ENCODE measurements at regions of chr15 and their contacts with region 1.

Region 1: DNA sequence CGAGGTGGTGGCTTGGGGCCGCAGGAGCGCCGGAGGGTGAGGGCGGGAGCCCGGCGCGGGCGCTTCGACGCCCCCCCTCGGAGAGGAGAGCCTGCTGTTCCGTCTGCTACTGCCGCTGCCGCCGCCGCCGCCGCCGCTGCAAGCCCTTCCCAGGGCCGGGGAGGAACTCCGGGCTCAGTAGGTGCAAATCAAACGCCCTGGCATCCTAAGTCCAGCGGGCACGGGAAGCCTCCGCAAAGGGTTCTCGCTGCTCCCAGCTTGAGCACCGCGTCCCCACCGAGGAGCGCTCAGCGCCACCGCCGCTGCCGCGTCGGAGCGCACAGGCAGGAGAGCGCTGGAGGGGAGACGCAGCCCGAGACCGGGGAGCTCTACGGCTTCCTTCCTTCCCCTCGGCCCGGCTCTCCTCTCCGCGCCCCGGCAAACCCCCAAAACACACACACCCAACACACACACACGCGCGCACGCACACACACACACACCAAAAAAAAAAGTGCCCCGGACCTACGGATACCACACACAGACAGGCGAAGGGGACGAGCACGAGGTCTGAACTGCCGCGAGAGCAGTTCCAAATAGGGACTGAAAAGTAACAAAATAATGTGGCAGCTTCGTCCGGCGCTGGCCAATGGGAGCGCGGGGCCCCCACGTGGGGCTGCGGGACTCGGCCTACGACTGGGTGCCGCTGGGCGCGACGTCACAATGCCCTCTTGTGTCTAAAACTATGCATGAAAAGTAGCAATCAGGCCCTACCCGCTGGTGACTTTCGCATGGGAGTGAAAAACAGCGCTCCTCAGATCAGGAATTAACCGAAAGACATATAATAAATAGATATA is at the start of gene TLE3:
- DNase-seq: peak; percentile 99
- ATAC-seq: peak; percentile 53
- H3K4me3 ChIP-seq: peak within 1 kb of the TSS; percentile 82 to 97 (median 92)
- H3K4me3 Mint-ChIP-seq: peak within 1 kb of the TSS; percentile 98
- H3K27ac ChIP-seq: peak within 1 kb of the TSS; percentile 79 to 87
- H3K27ac Mint-ChIP-seq: peak within 1 kb of the TSS; percentile 97
- H3K4me1 ChIP-seq: peaks cover 57 to 68% of the 10 kb centered on the region in 2 donors
- H3K4me1 Mint-ChIP-seq: peaks cover 65% of the 10 kb centered on the region
- H3K27me3 ChIP-seq: peaks cover 0 to 20% (median 10%) of the 10 kb centered on the region in 4 experiments
- H3K27me3 Mint-ChIP-seq: peaks cover under 1% of the 10 kb centered on the region
- CTCF ChIP-seq: peak; percentile 56
- total RNA-seq, gene TLE3: 261 and 278 TPM in 2 replicates

Region 2: DNA sequence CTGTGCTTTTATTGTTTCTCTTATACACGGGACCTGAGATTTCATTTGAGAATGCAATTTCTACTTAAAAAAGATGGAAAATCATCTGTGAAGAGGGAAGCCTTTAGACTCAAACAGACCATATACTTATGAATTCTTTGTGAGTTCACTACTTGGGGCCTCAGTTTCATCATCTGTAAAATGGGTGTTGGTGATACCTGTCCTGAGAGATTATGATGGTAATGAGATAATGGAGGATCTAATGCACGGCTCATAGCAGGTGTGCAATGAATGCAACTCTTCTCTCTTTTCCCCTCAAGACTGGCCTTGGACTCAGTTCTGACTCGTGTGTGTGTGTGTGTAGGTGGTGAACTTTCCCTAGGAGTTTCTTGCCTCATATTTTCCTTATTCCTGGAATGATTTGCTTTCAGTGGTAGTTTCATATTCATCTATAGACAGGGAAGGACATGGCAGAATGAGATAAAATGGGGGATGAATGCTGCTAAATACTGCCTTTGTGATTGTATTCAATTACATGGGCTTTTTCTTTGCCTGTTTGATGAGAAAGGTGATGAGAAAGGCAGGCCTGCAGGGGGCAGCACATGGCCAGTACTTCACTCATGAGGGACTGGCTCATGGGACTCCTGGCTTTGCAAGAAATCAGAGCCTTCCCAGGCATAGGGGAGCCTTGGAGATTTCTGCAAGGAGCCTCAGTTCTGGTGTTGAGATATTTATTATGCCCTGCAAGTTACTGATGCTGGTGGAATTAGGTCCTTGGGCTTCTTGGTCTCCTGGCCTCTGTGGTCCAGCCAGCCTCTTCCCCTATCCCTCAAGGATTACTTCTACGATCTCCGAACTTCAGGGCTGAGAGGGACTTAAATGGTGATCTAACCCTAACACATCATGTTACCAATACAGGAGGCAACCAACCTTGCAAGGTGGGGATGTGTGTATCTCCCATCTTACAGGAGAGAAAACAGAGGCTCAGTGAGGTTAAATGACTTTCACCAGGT is 574.2 kb before region 1 on chr15:
- CTCF ChIA-PET with region 1: no interaction called
- POLR2A ChIA-PET with region 1: no interaction called
- intact Hi-C with region 1: loop called (anchors 5 kb)
- DNase-seq: peak; percentile 47
- ATAC-seq: no peak
- H3K4me3 ChIP-seq: no peak overlapping the region
- H3K4me3 Mint-ChIP-seq: no peak overlapping the region
- H3K27ac ChIP-seq: no peak overlapping the region
- H3K27ac Mint-ChIP-seq: no peak overlapping the region
- H3K4me1 ChIP-seq: no peaks in the 10 kb centered on the region
- H3K4me1 Mint-ChIP-seq: no peaks in the 10 kb centered on the region
- H3K27me3 ChIP-seq: peaks cover 0 to 7% (median 2%) of the 10 kb centered on the region in 4 experiments
- H3K27me3 Mint-ChIP-seq: peaks cover 8% of the 10 kb centered on the region
- CTCF ChIP-seq: peak; percentile 70

Region 3: GRCh38 chr15:69755551-69756310 is 341.8 kb before region 1 on chr15:
- CTCF ChIA-PET with region 1: interaction called, 8 read pairs
- POLR2A ChIA-PET with region 1: interaction called, 36 read pairs
- intact Hi-C with region 1: loop called (anchors 1 kb)
- DNase-seq: peak; percentile 84
- ATAC-seq: peak; percentile 85
- H3K4me3 ChIP-seq: peak overlapping the region in 2 of 5 experiments; percentile 8 to 23
- H3K4me3 Mint-ChIP-seq: peak overlapping the region; percentile 84
- H3K27ac ChIP-seq: peak overlapping the region; percentile 22 to 73
- H3K27ac Mint-ChIP-seq: peak overlapping the region; percentile 91
- H3K4me1 ChIP-seq: peaks cover 69 to 72% of the 10 kb centered on the region in 2 donors
- H3K4me1 Mint-ChIP-seq: peaks cover 79% of the 10 kb centered on the region
- H3K27me3 ChIP-seq: no peaks in the 10 kb centered on the region
- H3K27me3 Mint-ChIP-seq: no peaks in the 10 kb centered on the region
- CTCF ChIP-seq: no peak

Region 4: GRCh38 chr15:70014860-70015490 is 82.6 kb before region 1 on chr15:
- CTCF ChIA-PET with region 1: interaction called, 4 read pairs
- POLR2A ChIA-PET with region 1: interaction called, 4 read pairs
- intact Hi-C with region 1: loop called (anchors 2 kb)
- DNase-seq: peak; percentile 72
- ATAC-seq: peak; percentile 76
- H3K4me3 ChIP-seq: peak overlapping the region in 1 of 5 experiments; percentile 37
- H3K4me3 Mint-ChIP-seq: peak overlapping the region; percentile 76
- H3K27ac ChIP-seq: peak overlapping the region; percentile 81 to 84
- H3K27ac Mint-ChIP-seq: peak overlapping the region; percentile 97
- H3K4me1 ChIP-seq: peaks cover 69 to 77% of the 10 kb centered on the region in 2 donors
- H3K4me1 Mint-ChIP-seq: peaks cover 79% of the 10 kb centered on the region
- H3K27me3 ChIP-seq: no peaks in the 10 kb centered on the region
- H3K27me3 Mint-ChIP-seq: no peaks in the 10 kb centered on the region
- CTCF ChIP-seq: no peak

Region 5: GRCh38 chr15:70196314-70197291 is 99.0 kb after region 1 on chr15:
- CTCF ChIA-PET with region 1: no interaction called
- POLR2A ChIA-PET with region 1: interaction called, 8 read pairs
- intact Hi-C with region 1: loop called (anchors 1 kb)
- DNase-seq: peak; percentile 86
- ATAC-seq: peak; percentile 85
- H3K4me3 ChIP-seq: no peak overlapping the region
- H3K4me3 Mint-ChIP-seq: peak overlapping the region; percentile 72
- H3K27ac ChIP-seq: no peak overlapping the region
- H3K27ac Mint-ChIP-seq: peak overlapping the region; percentile 89
- H3K4me1 ChIP-seq: peaks cover 33 to 57% of the 10 kb centered on the region in 2 donors
- H3K4me1 Mint-ChIP-seq: peaks cover 51% of the 10 kb centered on the region
- H3K27me3 ChIP-seq: peaks cover 0 to 16% (median 6%) of the 10 kb centered on the region in 4 experiments
- H3K27me3 Mint-ChIP-seq: peaks cover 26% of the 10 kb centered on the region
- CTCF ChIP-seq: no peak

Region 6: DNA sequence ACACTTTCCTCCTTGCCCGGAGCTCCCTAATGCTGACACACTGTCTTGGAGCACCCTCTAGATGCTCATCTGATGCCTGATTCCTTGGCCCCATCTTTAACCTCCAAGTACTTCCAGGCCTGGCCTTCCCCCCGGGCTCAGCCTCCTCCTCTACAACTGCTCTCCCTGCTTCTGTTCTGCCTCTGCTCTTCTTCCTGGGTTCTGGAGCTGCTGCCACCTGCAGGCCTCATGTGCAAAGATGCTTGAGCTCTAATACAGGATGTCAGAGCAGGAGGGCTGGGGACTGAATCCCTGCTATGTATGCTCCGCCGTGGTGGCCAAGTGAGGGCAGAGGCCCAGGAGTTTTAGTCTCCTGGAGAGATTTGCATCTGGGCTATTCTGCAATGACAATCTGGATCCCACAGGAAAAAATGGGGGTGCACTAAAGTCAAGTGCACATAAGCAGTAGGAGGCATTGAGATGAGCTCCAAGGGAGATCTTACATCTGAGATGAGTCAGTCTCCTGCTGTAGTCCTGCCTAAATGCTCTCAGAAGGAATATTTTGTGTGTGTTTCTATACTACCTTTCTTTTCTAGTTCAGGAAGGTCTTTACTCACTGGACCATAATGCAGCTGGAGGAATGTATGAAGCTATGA is 369.5 kb after region 1 on chr15:
- CTCF ChIA-PET with region 1: interaction called, 29 read pairs
- POLR2A ChIA-PET with region 1: no interaction called
- intact Hi-C with region 1: no loop called
- DNase-seq: peak; percentile 70
- ATAC-seq: peak; percentile 84
- H3K4me3 ChIP-seq: no peak overlapping the region
- H3K4me3 Mint-ChIP-seq: no peak overlapping the region
- H3K27ac ChIP-seq: no peak overlapping the region
- H3K27ac Mint-ChIP-seq: peak overlapping the region; percentile 3
- H3K4me1 ChIP-seq: peaks cover 11 to 15% of the 10 kb centered on the region in 2 donors
- H3K4me1 Mint-ChIP-seq: peaks cover 21% of the 10 kb centered on the region
- H3K27me3 ChIP-seq: peaks cover 0 to 12% (median under 1%) of the 10 kb centered on the region in 4 experiments
- H3K27me3 Mint-ChIP-seq: peaks cover 9% of the 10 kb centered on the region
- CTCF ChIP-seq: peak; percentile 71

Measured in B cell (primary cell).